Panc1 (cell line): ENCODE measurements at regions of chr15 and their contacts with region 1.

Region 1: DNA sequence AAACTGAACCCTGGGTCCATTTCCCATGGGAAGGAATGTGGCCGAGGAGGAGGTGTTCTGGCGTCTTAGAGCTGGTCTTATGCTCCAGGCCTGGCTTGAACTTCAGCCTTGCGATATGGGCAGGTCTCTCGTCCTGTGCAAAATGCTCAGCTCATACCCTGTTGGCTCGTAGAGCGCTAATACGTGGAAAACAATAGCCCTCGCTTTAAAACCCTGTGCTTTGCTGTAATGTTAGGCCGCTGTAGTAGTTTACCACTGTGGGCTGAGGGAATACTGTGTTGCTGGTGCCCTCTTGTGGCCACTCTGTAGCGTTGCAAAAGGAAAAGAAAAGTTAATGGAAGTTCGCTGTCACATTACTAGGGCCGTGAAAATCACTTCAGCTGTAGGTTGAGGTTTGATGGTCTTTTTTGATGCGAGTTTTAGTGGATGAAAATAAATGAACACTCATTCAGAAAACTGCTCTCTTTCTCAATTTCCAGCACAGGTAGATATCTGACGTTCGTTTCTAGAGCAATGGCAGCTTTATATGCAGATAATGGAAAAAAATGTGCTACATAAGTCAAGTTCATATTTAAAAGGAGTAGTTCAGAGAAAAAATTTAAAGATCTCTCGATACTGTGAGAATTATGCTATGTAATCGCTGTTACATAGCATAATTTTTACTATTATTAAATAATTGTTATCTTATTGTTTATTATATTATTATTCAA is 92.9 kb downstream of the MCTP2 start:
- DNase-seq: peak; percentile 64
- ATAC-seq: peak; percentile 95
- H3K4me3 ChIP-seq: no peak overlapping the region
- H3K27ac ChIP-seq: no peak overlapping the region
- H3K4me1 ChIP-seq: no peaks in the 10 kb centered on the region
- H3K27me3 ChIP-seq: no peaks in the 10 kb centered on the region
- CTCF ChIP-seq: peak; percentile 90

Region 2: GRCh38 chr15:94163999-94164807 is 160.1 kb before region 1 on chr15:
- CTCF ChIA-PET with region 1: interaction called, 8 read pairs
- POLR2A ChIA-PET with region 1: no interaction called
- in situ Hi-C with region 1: no loop called
- intact Hi-C with region 1: loop called (anchors 1 kb)
- DNase-seq: no peak
- ATAC-seq: no peak
- H3K4me3 ChIP-seq: no peak overlapping the region
- H3K27ac ChIP-seq: no peak overlapping the region
- H3K4me1 ChIP-seq: no peaks in the 10 kb centered on the region
- H3K27me3 ChIP-seq: no peaks in the 10 kb centered on the region
- CTCF ChIP-seq: peak; percentile 76